HCT116 (cell line): ENCODE measurements at regions of chr12 and their contacts with region 1.

Region 1: DNA sequence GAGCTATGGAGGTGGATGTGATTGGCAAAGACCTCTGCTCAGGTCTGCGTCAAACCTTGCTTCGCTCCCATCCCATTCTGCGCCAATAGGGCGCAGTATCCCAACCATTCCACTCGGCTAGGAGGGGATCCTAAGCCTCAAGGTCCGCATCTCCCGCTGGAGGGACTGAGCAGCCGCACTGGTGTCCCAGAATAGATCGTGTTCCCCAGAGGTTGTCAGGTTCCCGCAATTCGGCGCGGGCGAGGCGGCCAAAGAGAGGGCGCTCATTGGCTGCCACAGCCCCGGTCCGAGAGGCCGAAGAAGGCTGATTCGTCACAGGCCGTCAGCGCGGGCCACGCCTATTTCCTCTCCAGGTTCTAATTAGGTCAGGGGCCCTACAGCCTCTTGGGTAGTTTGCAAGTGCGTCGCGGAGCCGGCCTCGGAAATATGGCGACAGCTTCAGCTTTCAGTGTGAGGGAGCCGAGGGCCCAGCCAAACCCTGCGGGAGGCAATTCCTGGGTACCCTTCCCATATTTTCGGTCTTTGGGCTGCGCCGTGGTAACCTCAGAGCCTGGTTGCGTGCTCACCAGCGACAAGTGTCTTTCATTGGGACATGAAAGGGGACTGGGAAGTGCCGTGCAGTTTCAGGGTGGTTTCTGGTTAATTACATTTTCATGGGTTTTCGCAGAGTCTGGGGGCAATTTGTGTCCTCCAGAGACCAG is 5.0 kb downstream of the OR10AD1 start:
- DNase-seq: peak; percentile 87
- ATAC-seq: peak; percentile 94
- H3K4me3 ChIP-seq: peak overlapping the region; percentile 54 to 69
- H3K27ac ChIP-seq: peak overlapping the region; percentile 62
- H3K4me1 ChIP-seq: peaks cover 10 to 20% of the 10 kb centered on the region in 2 experiments; a peak in 3 of 4 replicates
- H3K27me3 ChIP-seq: no peaks in the 10 kb centered on the region
- CTCF ChIP-seq: no peak; a peak in 1 of 6 replicates
- POLR2A ChIP-seq: peak; percentile 16
- RAD21 ChIP-seq: no peak

Region 2: GRCh38 chr12:47870175-47870781 is 327.8 kb before region 1 on chr12:
- CTCF ChIA-PET with region 1: no interaction called
- POLR2A ChIA-PET with region 1: no interaction called
- RAD21 ChIA-PET with region 1: no interaction called
- intact Hi-C with region 1: no loop called
- DNase-seq: no peak
- ATAC-seq: peak; percentile 91
- H3K4me3 ChIP-seq: no peak overlapping the region
- H3K27ac ChIP-seq: no peak overlapping the region
- H3K4me1 ChIP-seq: peaks cover 0 to 4% of the 10 kb centered on the region in 2 experiments; a peak in 1 of 4 replicates
- H3K27me3 ChIP-seq: no peaks in the 10 kb centered on the region
- CTCF ChIP-seq: peak; percentile 30 to 64 (median 52); a peak in 5 of 6 replicates
- POLR2A ChIP-seq: no peak
- RAD21 ChIP-seq: 0 out of 2 replicates have a peak, but pooled peaks have one; percentile 8

Region 3: DNA sequence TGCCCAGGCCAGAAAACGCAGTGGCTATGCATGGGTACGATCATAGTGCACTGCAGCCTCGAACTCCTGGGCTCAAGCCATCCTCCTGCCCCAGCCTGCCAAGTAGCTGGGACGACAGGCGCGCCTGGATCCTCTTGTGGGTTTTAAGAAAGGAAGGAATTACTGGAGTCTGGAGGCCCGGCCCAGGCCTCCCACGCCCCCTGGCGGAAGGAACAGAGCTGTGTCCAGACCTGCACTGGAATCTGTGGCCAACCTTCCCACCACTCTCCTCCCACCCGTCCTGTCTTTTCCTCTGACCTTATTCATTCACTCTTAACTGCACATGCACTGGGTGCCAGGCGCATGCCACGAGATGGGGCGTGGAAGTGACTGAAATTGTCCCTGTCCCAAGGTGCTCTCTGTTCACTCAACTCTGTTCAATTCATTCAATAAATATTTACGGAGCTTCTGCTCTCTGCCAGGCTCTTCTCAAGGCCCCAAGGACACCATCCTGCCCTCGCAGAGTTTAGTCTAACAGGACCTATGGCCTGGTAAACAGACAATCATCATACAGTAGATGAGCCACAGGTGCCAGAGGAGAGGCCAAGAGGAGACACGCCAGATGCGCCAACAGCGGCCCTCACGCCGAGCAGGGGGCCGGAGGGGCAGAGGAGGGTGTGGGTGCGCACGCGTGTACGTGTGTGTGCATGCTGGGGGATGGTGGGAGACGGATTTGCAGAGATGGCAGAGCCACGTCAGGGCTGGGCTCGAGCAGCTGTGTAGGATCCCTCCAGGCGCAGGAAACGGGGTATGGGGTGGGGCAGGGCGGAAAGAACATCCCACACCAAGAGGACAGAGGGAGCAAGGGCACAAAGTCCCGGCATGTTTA is 248.4 kb before region 1 on chr12:
- CTCF ChIA-PET with region 1: no interaction called
- POLR2A ChIA-PET with region 1: no interaction called
- RAD21 ChIA-PET with region 1: no interaction called
- intact Hi-C with region 1: no loop called
- DNase-seq: peak; percentile 69
- ATAC-seq: peak; percentile 98
- H3K4me3 ChIP-seq: no peak overlapping the region
- H3K27ac ChIP-seq: no peak overlapping the region; the same call in 1 of the 2 replicates
- H3K4me1 ChIP-seq: peaks cover 12 to 46% of the 10 kb centered on the region in 2 experiments; a peak in 3 of 4 replicates
- H3K27me3 ChIP-seq: no peaks in the 10 kb centered on the region
- CTCF ChIP-seq: peak; percentile 85 to 96 (median 91)
- POLR2A ChIP-seq: no peak
- RAD21 ChIP-seq: peak; percentile 89

Region 4: DNA sequence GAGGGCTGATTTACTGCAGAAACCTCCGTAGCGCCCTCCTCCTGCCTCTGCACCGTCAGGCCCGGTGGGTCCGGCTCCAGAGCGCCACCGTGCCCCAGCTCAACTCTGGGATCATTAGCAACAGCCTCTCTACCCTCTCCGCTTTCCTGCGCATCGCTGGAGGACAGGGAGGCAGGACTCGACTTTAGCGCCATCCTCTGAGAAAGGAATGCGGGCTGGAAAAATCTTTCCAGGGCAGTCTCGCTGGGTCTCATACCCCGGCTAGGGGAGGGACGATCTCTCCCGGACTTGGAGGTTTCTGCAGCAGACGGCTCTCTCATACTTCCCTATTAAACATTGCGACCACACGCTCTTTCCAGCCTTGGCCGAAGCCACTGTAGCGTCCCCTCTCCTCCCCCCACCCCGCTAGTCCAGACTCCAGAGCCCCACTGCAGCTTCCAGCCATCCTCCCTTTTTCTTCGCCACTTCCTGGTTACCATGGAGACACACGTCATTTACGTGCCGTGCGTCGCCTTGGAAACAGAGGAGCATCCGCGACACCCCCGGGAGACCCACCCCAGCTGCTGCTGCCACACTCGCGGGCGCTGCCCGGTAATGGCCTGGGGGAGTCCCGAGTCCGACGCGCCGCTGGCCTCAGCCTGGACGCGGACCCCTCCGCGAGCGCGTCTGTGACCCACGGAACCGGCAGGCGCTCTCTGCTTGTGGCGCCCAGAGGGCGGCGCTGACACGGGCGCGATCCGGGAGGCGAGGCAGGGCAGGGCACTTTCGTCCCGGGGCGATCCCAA is 14.8 kb before region 1 on chr12 and contains the start of gene CCDC184:
- CTCF ChIA-PET with region 1: interaction called, 13 read pairs
- POLR2A ChIA-PET with region 1: no interaction called
- RAD21 ChIA-PET with region 1: no interaction called
- intact Hi-C with region 1: no loop called
- DNase-seq: peak; percentile 57
- ATAC-seq: peak; percentile 85
- H3K4me3 ChIP-seq: peak within 1 kb of the TSS; percentile 62 to 64
- H3K27ac ChIP-seq: no peak within 1 kb of the TSS
- H3K4me1 ChIP-seq: peaks cover 4 to 25% of the 10 kb centered on the region in 2 experiments; a peak in 2 of 4 replicates
- H3K27me3 ChIP-seq: peaks cover 9% of the 10 kb centered on the region; the same call in 1 of the 2 replicates
- CTCF ChIP-seq: peak; percentile 39 to 81 (median 44)
- POLR2A ChIP-seq: no peak
- RAD21 ChIP-seq: peak; percentile 34; the same call in 1 of the 2 replicates
- total RNA-seq, gene CCDC184: 0.34 TPM

Region 5: DNA sequence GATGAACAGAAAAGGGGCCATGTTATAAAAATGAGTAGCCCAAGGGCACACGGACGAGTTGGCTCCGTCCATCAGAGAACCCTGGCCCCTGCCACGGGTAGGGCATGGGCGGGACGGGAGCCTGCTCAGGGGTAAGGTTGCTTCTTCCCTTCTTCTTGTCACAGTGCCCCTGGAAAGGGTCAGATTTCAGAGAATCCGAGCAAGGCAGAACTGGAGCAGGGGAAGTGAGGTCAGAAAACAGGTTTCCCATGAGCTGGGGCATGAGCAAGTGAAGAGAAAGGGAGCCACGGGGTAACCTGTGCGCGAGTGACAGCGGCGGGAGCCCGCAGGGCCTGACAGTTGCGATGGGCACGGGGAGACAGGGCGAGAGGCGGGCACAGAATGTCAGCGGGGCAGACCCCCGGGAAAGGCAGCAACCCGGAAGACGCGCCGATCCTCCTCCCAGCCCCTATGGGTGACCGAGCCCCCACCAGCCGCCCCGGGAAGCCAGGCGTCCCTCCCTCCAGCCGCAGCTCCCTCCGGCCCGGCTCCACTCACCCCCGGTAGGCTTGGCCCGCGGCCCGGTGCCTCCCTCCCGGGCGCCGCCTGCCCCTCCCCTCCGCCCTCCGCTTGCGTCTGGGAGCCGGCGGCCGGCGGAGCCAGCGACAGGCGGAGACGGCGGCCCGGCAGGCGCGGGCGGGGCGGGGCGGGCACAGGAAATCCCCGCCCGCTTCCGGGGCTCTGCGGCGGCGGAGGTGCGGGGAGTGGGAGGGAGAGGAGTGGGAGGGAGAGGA is 152.3 kb after region 1 on chr12 and contains the start of gene ZNF641:
- CTCF ChIA-PET with region 1: no interaction called
- POLR2A ChIA-PET with region 1: no interaction called
- RAD21 ChIA-PET with region 1: no interaction called
- intact Hi-C with region 1: loop called (anchors 5 kb)
- DNase-seq: no peak
- ATAC-seq: peak; percentile 92
- H3K4me3 ChIP-seq: peak within 1 kb of the TSS; percentile 71 to 92
- H3K27ac ChIP-seq: peak within 1 kb of the TSS; percentile 46
- H3K4me1 ChIP-seq: peaks cover 8 to 18% of the 10 kb centered on the region in 2 experiments
- H3K27me3 ChIP-seq: no peaks in the 10 kb centered on the region
- CTCF ChIP-seq: no peak
- POLR2A ChIP-seq: peak; percentile 49
- RAD21 ChIP-seq: no peak
- total RNA-seq, gene ZNF641: 12.1 TPM

Region 6: DNA sequence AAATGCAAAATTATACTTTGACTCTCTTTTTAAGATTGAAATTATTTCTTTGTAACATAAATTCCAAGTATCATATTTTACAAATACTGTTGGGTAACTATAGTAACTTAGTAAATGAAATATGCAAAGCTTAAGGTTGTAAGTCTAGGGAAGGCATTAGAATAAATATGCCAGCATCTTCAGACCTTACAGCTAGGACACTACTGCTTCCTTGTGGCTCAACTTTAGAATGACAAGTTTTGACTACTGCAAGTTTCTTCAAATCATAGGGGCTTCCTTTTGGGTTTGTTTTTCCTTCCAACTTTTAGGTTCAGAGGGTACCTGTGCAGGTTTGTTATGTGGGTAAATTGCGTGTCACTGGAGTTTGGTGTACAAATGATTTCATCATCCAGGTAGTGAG is 256.5 kb after region 1 on chr12:
- CTCF ChIA-PET with region 1: interaction called, 6 read pairs
- POLR2A ChIA-PET with region 1: no interaction called
- RAD21 ChIA-PET with region 1: no interaction called
- intact Hi-C with region 1: loop called (anchors 10 kb)
- DNase-seq: peak; percentile 31
- ATAC-seq: peak; percentile 71
- H3K4me3 ChIP-seq: no peak overlapping the region
- H3K27ac ChIP-seq: no peak overlapping the region
- H3K4me1 ChIP-seq: no peaks in the 10 kb centered on the region
- H3K27me3 ChIP-seq: no peaks in the 10 kb centered on the region
- CTCF ChIP-seq: peak; percentile 39 to 60 (median 56); a peak in 4 of 6 replicates
- POLR2A ChIP-seq: no peak
- RAD21 ChIP-seq: peak; percentile 72